Activated CD8-positive, alpha-beta memory T cell treated with anti-CD3 and anti-CD28 coated beads, Interleukin-2, amount 10 ng/mL, durations not matched to agents 7 days and 5 days (primary cell): ENCODE measurements at regions of chr7 and their contacts with region 1.

Region 1: GRCh38 chr7:155344600-155345433 is 47.1 kb downstream of the INSIG1 start:
- DNase-seq: peak; percentile 84
- ATAC-seq: peak; percentile 98
- H3K4me3 Mint-ChIP-seq: peak overlapping the region; percentile 14
- H3K27ac Mint-ChIP-seq: no peak overlapping the region
- H3K4me1 Mint-ChIP-seq: peaks cover 4% of the 10 kb centered on the region
- H3K27me3 Mint-ChIP-seq: peaks cover 25% of the 10 kb centered on the region

Region 2: DNA sequence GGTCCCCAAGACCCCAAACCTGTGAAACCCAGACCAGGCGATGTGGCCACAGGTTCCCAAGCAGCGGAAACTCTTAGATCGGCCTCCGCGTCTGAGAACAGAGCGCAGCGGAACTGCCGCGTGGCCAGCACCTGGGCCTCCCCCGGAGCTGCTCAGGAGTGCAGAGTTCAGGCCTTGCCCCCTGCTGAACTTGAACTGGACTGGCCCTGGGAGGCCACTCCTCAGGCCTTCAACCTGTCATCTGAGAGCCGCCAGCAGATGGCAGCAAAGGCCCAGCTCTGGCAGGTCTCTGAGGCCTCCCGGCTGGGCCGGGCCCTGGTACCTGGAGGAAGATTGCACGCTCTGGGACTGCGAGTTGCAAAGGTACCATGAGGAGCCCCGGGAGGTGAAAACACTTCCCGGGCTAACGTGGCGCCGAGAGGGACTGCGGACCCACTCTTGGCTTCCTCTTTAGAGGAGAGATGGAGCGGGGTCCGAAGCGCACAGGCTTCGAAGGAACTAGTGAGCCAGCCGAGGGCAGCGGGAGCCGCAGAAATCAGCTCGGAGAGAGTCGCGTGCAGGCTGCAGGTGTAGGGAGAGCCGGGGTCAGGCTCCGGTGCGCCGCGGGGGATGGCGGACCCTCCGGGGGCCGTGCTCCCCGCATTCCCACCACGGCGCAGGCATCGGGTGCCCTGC is 431.0 kb before region 1 on chr7:
- CTCF ChIA-PET with region 1: interaction called, 23 read pairs
- DNase-seq: peak; percentile 89
- ATAC-seq: peak; percentile 99
- H3K4me3 Mint-ChIP-seq: peak overlapping the region; percentile 36
- H3K27ac Mint-ChIP-seq: no peak overlapping the region
- H3K4me1 Mint-ChIP-seq: peaks cover 4% of the 10 kb centered on the region
- H3K27me3 Mint-ChIP-seq: peaks cover 15% of the 10 kb centered on the region

Region 3: GRCh38 chr7:155190688-155191087 is 154.1 kb before region 1 on chr7:
- CTCF ChIA-PET with region 1: interaction called, 51 read pairs
- DNase-seq: peak; percentile 66
- ATAC-seq: peak; percentile 74
- H3K4me3 Mint-ChIP-seq: no peak overlapping the region
- H3K27ac Mint-ChIP-seq: no peak overlapping the region
- H3K4me1 Mint-ChIP-seq: peaks cover 46% of the 10 kb centered on the region
- H3K27me3 Mint-ChIP-seq: peaks cover 6% of the 10 kb centered on the region

Region 4: GRCh38 chr7:155205368-155206317 is 139.2 kb before region 1 on chr7:
- CTCF ChIA-PET with region 1: interaction called, 12 read pairs
- DNase-seq: peak; percentile 97
- ATAC-seq: peak; percentile 91
- H3K4me3 Mint-ChIP-seq: peak overlapping the region; percentile 86
- H3K27ac Mint-ChIP-seq: peak overlapping the region; percentile 99
- H3K4me1 Mint-ChIP-seq: peaks cover 35% of the 10 kb centered on the region
- H3K27me3 Mint-ChIP-seq: no peaks in the 10 kb centered on the region

Region 5: DNA sequence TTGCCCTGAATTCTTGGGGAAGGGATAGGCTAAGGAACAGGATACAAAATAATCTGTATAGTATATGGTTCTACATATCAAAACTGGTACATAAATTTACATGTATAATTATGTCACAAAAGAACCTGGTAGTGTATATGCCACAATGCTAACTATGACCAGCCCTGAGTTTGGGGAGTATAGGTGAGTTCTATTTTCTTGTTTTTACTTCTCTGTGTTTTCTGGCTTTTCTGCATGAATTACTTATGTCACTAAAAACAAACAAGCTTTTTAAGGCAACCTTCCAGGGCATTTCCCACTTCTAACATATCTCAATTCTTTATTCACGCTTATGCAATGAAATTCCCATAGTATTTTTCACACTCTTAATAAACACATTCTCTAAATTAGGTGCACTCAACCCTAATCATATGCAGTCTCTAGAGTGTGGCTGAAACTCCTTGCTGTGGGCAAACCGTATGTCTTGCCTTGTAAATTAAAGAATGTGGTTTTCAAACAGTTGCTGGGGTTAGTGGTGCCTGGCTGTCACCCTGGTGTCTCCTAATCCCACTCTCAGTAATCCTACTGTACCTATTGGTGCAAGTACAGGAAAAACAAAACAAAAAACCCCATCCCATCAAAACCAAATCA is 61.1 kb before region 1 on chr7:
- CTCF ChIA-PET with region 1: interaction called, 10 read pairs
- DNase-seq: peak; percentile 79
- ATAC-seq: peak; percentile 86
- H3K4me3 Mint-ChIP-seq: peak overlapping the region; percentile 31
- H3K27ac Mint-ChIP-seq: peak overlapping the region; percentile 76
- H3K4me1 Mint-ChIP-seq: peaks cover 75% of the 10 kb centered on the region
- H3K27me3 Mint-ChIP-seq: peaks cover 23% of the 10 kb centered on the region

Region 6: GRCh38 chr7:155298834-155299534 is 45.8 kb before region 1 on chr7:
- CTCF ChIA-PET with region 1: interaction called, 14 read pairs
- DNase-seq: peak; percentile 99
- ATAC-seq: peak; percentile 72
- H3K4me3 Mint-ChIP-seq: peak overlapping the region; percentile 88
- H3K27ac Mint-ChIP-seq: peak overlapping the region; percentile 97
- H3K4me1 Mint-ChIP-seq: peaks cover 61% of the 10 kb centered on the region
- H3K27me3 Mint-ChIP-seq: no peaks in the 10 kb centered on the region